ENCODE measurements at regions of chr16 and their contacts with region 1.

Region 1: GRCh38 chr16:11715246-11715947 is 27.3 kb downstream of the TXNDC11 start:
- DNase-seq: no peak
- H3K4me3 ChIP-seq: no peak overlapping the region
- H3K27ac ChIP-seq: no peak overlapping the region
- H3K4me1 ChIP-seq: no peaks in the 10 kb centered on the region
- H3K27me3 ChIP-seq: no peaks in the 10 kb centered on the region
- CTCF ChIP-seq: no peak
- EP300 ChIP-seq: no peak
- POLR2A ChIP-seq: no peak

Region 2: DNA sequence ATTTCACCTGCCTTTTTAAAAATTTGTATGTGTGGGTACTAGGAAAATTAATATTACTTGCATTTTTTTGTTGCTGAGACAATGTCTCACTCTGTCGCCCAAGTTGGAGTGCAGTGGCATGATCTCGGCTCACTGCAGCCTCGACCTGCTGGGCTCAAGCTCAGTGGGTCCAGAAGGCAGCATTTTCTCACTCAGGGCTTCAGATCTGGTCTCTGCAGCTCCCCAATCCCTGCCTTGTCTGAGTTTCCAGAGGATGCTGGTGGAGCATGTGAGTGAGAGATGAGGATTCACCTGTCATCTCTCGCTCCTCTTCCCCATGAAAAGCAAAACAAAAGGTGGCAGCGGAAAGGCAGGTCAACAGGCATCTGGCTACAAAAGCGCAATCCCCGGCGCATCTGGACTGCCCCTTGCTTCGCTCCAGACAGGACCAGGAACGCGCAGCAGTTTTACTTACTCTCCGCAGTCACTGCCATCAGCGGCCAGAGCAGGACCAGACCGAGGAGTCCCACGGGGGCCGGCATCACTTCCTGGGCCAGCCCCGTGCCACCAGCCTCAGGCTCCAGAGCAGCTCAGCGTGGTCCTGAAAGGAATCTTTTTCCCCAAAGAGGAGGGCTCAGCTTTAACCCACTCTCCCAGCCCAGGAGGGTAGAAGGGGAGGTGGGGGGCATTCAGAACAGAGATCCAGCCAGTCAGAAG is 188.6 kb before region 1 on chr16:
- intact Hi-C with region 1: loop called in 1 of 4 experiments (anchors 5 kb)
- DNase-seq: no peak
- H3K4me3 ChIP-seq: no peak overlapping the region
- H3K27ac ChIP-seq: no peak overlapping the region
- H3K4me1 ChIP-seq: no peaks in the 10 kb centered on the region
- H3K27me3 ChIP-seq: no peaks in the 10 kb centered on the region
- CTCF ChIP-seq: no peak
- EP300 ChIP-seq: no peak
- POLR2A ChIP-seq: no peak

Region 3: GRCh38 chr16:11597239-11598101 is 117.9 kb before region 1 on chr16:
- intact Hi-C with region 1: loop called in 1 of 4 experiments (anchors 10 kb)
- DNase-seq: peak in 3 of 5 donors; percentile 19 to 33 (median 33)
- H3K4me3 ChIP-seq: no peak overlapping the region
- H3K27ac ChIP-seq: peak overlapping the region in 1 of 2 donors; percentile 26
- H3K4me1 ChIP-seq: peaks cover 9% of the 10 kb centered on the region
- H3K27me3 ChIP-seq: no peaks in the 10 kb centered on the region
- CTCF ChIP-seq: no peak
- EP300 ChIP-seq: no peak
- POLR2A ChIP-seq: no peak

Region 4: DNA sequence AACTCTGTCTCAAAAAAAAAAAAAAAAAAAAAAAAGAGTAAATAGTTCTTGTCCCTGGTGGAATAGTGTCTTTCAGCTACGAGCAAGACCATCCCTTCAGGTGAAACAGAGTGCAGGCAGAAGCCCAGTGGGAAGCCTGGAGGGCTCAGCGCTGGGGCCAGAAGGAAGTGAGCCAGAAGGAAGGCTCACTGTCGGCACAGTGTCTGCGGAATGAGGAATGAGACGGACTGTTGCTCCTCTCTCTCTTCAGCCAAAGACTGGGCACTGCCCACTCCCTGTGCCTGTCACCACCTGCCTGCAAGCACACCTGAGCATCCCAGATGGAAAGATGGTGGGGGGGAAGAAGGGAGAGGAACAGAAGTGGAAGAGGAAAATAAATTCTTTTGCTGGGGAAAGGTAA is 128.5 kb after region 1 on chr16:
- intact Hi-C with region 1: no loop called
- DNase-seq: no peak
- H3K4me3 ChIP-seq: no peak overlapping the region
- H3K27ac ChIP-seq: no peak overlapping the region
- H3K4me1 ChIP-seq: no peaks in the 10 kb centered on the region
- H3K27me3 ChIP-seq: no peaks in the 10 kb centered on the region
- CTCF ChIP-seq: no peak
- EP300 ChIP-seq: no peak
- POLR2A ChIP-seq: no peak

Measured in ovary (tissue), 10 donors.